Dorsolateral prefrontal cortex (tissue), 120 donors: ENCODE measurements at regions of chr3 and their contacts with region 1.

Region 1: GRCh38 chr3:123328851-123329635 is 119.8 kb downstream of the ADCY5 start:
- DNase-seq: peak; percentile 77 to 89 (median 86)
- H3K4me3 ChIP-seq: no peak overlapping the region
- H3K27ac ChIP-seq: peak overlapping the region in 21 of 59 donors; percentile 2 to 73 (median 48)
- H3K27me3 ChIP-seq: no peaks in the 10 kb centered on the region
- CTCF ChIP-seq: peak; percentile 91 to 99 (median 98)

Region 2: DNA sequence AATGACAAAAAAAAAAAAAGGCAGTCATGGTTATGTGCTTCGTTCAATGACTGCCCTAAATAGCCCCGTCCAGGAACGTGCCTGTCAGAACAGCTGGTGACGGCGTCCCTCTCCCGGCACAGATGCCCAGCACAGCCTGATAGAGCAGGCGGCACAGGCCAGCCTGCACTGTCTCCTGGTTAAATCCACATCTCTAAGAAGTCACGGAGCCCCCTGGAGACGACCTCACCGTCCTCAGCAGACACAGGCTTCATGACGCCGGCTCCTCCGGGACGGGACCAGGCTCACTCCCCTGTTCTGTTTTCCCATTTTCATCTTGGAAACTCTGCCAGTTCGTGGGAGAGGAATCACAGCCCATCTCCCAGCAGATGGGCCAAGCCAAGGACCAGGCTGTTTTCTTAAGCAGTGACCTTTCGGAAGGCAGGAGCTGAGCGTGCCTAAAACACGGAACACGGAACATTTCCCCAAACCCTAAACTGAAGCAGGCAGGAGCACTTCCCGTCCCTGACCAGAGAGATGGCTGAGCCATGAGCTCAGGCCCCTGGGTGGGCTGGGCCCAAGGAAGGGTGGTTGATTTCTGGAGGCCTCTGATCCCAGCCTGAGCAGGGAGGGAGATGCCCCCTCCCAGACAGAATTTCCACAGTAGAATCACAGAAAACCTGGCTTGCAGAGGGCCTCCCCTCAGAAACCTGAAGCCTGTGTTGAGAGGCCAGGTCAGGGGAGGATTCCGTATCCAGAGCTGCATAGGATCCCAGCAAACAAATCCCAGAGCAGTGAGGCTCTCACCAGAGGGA is 84.0 kb after region 1 on chr3:
- intact Hi-C with region 1: loop called in 1 of 2 experiments (anchors 5 kb)
- DNase-seq: peak in 9 of 10 donors; percentile 61 to 82 (median 74)
- H3K4me3 ChIP-seq: peak overlapping the region in 45 of 59 donors; percentile 0 to 46 (median 26)
- H3K27ac ChIP-seq: peak overlapping the region; percentile 70 to 99 (median 92)
- H3K27me3 ChIP-seq: no peaks in the 10 kb centered on the region
- CTCF ChIP-seq: peak in 3 of 56 donors; percentile 3 to 24 (median 11)

Region 3: GRCh38 chr3:123444023-123444422 is 115.0 kb after region 1 on chr3:
- intact Hi-C with region 1: loop called (anchors 2 kb)
- DNase-seq: peak in 6 of 10 donors; percentile 53 to 88 (median 62)
- H3K4me3 ChIP-seq: peak overlapping the region in 55 of 59 donors; percentile 1 to 85 (median 61)
- H3K27ac ChIP-seq: peak overlapping the region; percentile 78 to 100 (median 95)
- H3K27me3 ChIP-seq: no peaks in the 10 kb centered on the region
- CTCF ChIP-seq: peak in 4 of 56 donors; percentile 11 to 24 (median 18)

Region 4: DNA sequence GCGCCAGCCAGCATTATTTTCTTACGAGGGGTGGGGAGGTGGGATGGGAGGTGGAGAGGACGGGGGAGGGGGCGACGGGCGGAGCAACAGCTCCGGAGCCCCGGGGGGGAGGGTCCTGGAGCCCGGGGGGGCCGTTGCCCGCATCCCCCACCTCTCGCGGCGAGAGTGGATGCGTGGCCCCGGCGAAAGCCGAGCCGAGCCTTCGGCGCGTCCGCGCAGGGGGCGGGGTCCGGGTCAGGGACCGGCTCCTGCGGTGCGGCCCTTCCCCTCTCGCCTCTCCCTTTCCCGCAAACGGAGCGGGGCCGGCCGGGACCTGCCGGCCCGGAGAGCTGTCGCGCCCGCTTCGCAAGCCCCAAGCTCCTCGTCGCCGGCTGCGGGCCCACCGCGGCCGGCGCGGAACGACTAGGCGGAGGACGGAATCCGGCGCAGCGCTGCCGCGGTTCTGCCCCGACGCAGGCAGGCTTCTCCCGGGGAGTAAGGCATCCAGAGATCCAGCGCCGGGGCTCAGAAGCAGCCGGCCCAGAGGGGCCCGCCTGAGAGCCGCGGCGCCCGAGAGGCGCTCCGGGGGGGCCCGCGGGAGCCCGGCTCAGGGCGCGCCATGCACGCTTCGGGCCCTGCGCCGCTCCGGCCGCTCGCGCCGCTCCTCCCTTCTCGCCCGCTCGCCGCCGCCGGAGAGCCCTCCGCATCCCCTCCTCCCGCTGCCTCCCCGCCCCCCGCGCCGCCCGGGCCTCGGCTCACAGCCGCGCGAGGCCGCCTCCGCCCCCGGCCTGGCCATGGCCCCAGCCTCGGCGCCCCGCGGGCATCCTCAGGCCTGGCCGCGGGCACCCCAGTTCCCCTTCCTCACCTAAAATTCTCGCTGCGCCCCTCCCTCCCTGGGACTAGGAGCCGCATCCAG is 120.3 kb after region 1 on chr3:
- intact Hi-C with region 1: loop called (anchors 2 kb)
- DNase-seq: peak in 5 of 10 donors; percentile 35 to 83 (median 72)
- H3K4me3 ChIP-seq: peak overlapping the region; percentile 56 to 89 (median 76)
- H3K27ac ChIP-seq: peak overlapping the region; percentile 74 to 100 (median 93)
- H3K27me3 ChIP-seq: no peaks in the 10 kb centered on the region
- CTCF ChIP-seq: peak in 4 of 56 donors; percentile 6 to 39 (median 11)

Region 5: GRCh38 chr3:123489400-123490004 is 160.5 kb after region 1 on chr3:
- intact Hi-C with region 1: loop called (anchors 1 kb)
- DNase-seq: peak; percentile 52 to 83 (median 79)
- H3K4me3 ChIP-seq: peak overlapping the region in 1 of 59 donors; percentile 15
- H3K27ac ChIP-seq: peak overlapping the region in 17 of 59 donors; percentile 4 to 68 (median 33)
- H3K27me3 ChIP-seq: no peaks in the 10 kb centered on the region
- CTCF ChIP-seq: peak; percentile 75 to 98 (median 92)

Region 6: DNA sequence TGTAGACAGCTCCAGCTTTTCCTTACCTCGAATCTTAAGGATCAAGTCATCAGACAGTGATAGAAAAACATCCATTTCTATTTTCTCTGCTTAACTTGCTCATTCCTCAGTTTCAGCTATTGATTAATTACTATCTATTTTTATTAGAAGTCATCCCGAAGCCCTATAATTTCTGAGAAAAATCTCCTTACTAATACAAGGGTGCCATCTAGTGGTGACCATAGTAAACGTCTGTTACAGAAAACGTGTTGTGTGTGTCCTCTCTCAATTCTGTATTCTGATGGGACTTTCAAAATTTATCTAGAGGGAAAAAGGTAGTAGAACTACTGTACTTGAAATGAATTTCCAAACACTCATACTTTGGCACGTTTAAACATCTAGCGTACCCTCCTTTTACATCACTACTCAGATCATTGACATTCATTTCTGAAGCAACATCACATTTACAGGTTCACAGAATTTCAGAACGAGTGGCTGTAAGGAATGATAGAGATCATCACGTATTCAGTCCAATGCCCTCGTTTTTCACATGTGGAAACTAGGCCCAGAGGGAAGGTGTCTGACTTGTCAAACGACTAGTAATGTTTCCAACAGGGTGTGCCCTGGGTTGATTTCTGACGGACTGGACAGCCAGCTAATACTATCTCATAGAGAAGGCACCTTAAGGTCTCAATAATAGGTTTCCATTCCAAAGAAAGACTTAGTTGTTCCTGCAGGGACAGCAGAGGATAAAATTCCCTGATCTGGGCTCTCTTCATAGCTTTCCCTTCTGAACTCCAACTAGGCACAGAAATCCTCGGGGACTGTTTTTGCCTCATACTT is 230.2 kb after region 1 on chr3:
- intact Hi-C with region 1: loop called (anchors 2 to 5 kb)
- DNase-seq: no peak
- H3K4me3 ChIP-seq: no peak overlapping the region
- H3K27ac ChIP-seq: peak overlapping the region in 49 of 59 donors; percentile 10 to 88 (median 56)
- H3K27me3 ChIP-seq: no peaks in the 10 kb centered on the region
- CTCF ChIP-seq: peak; percentile 68 to 93 (median 86)